Body of pancreas (tissue), 4 donors: ENCODE measurements at regions of chr1 and their contacts with region 1.

Region 1: DNA sequence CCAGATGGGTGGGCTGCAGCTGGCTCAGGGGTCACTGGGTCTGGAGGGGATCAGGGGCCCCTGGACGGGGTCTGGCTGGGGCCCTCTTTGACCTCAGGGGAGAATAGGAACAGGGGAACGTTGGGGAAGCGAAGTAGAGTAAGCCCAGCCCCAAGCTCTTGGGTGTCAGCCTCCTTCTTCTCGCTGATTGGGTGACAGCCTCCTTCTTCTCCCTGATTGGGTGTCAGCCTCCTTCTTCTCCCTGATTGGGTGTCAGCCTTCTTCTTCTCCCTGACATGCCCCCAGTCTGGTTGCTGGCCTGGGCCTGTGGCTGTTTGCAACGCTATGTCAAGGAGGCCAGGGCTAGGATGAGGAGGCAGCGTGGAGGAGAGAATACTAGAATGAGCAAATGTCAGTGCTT is 76.7 kb upstream of the CASZ1 start:
- DNase-seq: no peak
- ATAC-seq: no peak
- H3K4me3 ChIP-seq: no peak overlapping the region
- H3K27ac ChIP-seq: no peak overlapping the region
- H3K4me1 ChIP-seq: no peaks in the 10 kb centered on the region
- H3K27me3 ChIP-seq: no peaks in the 10 kb centered on the region
- CTCF ChIP-seq: no peak
- POLR2A ChIP-seq: no peak

Region 2: DNA sequence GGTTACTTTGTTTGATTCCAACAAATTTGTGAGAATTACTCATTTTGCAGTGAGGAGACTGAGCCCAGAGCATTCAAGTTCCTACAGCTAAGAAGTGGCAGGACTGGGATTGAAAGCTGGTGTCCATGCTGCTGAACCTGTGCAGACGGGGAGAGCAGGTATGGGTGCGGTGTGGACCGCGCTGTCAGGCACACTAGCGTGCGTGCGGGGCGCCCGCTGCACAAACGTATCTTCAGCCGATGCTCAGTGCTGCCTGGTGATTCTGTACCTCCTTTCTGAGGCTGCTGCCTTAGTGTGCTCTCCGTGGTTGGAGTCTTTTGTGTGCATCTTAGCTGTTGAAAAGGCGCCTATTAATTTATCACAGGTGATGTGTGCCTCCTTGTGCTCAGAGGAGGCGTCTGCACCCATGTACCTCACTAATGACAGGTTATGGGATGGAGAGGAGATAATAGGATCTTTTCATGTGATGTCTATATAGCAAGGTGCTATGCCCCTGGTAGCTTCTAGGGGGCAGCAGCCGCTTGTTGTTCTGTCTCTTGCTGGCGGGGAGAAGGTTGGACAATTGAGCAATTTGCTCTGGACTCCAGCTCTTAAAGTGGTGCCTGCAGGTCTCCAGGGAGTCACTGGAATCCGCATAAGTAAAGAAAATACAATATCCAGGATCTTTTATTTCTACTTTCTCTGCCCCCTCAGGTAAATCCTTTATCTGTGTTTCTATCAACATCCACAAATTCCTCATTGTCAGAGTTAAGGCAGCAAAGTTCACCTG is 365.9 kb before region 1 on chr1:
- intact Hi-C with region 1: loop called (anchors 10 kb)
- DNase-seq: peak; percentile 64 to 79 (median 74)
- ATAC-seq: peak; percentile 88
- H3K4me3 ChIP-seq: no peak overlapping the region
- H3K27ac ChIP-seq: no peak overlapping the region
- H3K4me1 ChIP-seq: peaks cover 27% of the 10 kb centered on the region
- H3K27me3 ChIP-seq: no peaks in the 10 kb centered on the region
- CTCF ChIP-seq: peak; percentile 57 to 87 (median 78)
- POLR2A ChIP-seq: no peak

Region 3: DNA sequence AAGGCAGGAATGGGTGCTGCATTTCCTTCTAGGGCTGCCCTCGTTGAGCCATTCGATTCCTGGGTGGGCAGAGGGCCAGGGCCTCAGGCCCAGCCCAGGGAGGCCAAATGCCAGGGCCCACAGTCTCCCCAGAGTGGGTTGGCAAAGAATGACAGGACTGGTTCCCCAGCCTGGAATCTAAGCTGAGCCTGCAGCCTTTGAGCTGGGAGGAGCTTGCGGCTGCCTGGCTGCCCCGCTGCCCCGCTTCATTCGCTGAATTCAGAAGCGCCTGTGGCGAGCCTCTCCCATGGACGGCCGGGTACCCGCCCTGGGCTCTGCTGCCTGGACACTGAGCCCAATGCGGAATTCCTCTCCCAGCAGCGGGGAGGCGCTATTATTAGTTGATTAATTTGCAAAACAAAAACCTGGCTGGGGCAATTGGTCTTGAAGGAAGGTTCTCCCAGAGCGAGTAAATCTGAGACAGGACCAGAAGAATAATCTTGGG is 106.9 kb after region 1 on chr1:
- intact Hi-C with region 1: no loop called
- DNase-seq: peak; percentile 90 to 96 (median 95)
- ATAC-seq: peak; percentile 94
- H3K4me3 ChIP-seq: no peak overlapping the region
- H3K27ac ChIP-seq: peak overlapping the region; percentile 22 to 85 (median 70)
- H3K4me1 ChIP-seq: peaks cover 30% of the 10 kb centered on the region
- H3K27me3 ChIP-seq: no peaks in the 10 kb centered on the region
- CTCF ChIP-seq: peak; percentile 9 to 70 (median 59)
- POLR2A ChIP-seq: peak in 2 of 3 donors; percentile 59 to 68